Activated CD4-positive, alpha-beta memory T cell treated with anti-CD3 and anti-CD28 coated beads, Interleukin-2, amount 10 ng/mL, durations not matched to agents 7 days and 5 days (primary cell): ENCODE measurements at regions of chr17 and their contacts with region 1.

Region 1: GRCh38 chr17:65137021-65137991 is at the start of gene RGS9:
- DNase-seq: peak; percentile 90
- H3K4me3 Mint-ChIP-seq: peak within 1 kb of the TSS; percentile 84
- H3K27ac Mint-ChIP-seq: peak within 1 kb of the TSS; percentile 41
- H3K4me1 Mint-ChIP-seq: peaks cover 51% of the 10 kb centered on the region
- H3K27me3 Mint-ChIP-seq: no peaks in the 10 kb centered on the region
- total RNA-seq, gene RGS9: 30.4 to 31.2 TPM

Region 2: DNA sequence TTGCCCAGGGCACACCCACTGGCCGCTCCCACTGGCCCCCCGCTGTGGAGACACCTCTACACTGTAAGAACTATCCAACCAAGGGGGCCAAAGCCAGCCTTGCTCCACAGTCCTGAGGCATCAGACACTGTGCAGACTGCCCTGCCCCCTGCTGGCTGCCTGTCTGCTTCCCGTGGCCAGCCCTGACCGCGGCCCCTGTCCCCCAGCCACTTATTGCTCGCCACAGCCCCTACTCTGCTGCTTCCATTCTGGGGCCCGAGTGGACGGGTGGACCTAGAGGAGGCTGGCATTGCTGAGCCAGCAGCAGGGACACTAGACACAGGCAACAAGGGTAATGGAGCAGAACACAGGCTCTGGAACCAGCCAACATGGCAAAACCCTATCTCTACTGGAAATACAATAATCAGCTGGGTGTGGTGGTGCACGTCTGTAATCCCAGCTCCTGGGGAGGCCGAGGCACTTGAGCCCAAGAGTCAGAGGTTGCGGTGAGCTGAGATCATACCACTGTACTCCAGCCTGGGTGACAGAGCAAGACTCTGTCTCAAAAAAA is 198.3 kb before region 1 on chr17:
- CTCF ChIA-PET with region 1: interaction called, 14 read pairs
- POLR2A ChIA-PET with region 1: no interaction called
- DNase-seq: peak; percentile 54
- H3K4me3 Mint-ChIP-seq: no peak overlapping the region
- H3K27ac Mint-ChIP-seq: no peak overlapping the region
- H3K4me1 Mint-ChIP-seq: peaks cover 24% of the 10 kb centered on the region
- H3K27me3 Mint-ChIP-seq: no peaks in the 10 kb centered on the region

Region 3: GRCh38 chr17:65122836-65123756 is 14.2 kb before region 1 on chr17:
- CTCF ChIA-PET with region 1: interaction called, 17 read pairs
- POLR2A ChIA-PET with region 1: interaction called, 12 read pairs
- DNase-seq: peak; percentile 89
- H3K4me3 Mint-ChIP-seq: peak overlapping the region; percentile 75
- H3K27ac Mint-ChIP-seq: peak overlapping the region; percentile 97
- H3K4me1 Mint-ChIP-seq: peaks cover 48% of the 10 kb centered on the region
- H3K27me3 Mint-ChIP-seq: peaks cover 11% of the 10 kb centered on the region

Region 4: DNA sequence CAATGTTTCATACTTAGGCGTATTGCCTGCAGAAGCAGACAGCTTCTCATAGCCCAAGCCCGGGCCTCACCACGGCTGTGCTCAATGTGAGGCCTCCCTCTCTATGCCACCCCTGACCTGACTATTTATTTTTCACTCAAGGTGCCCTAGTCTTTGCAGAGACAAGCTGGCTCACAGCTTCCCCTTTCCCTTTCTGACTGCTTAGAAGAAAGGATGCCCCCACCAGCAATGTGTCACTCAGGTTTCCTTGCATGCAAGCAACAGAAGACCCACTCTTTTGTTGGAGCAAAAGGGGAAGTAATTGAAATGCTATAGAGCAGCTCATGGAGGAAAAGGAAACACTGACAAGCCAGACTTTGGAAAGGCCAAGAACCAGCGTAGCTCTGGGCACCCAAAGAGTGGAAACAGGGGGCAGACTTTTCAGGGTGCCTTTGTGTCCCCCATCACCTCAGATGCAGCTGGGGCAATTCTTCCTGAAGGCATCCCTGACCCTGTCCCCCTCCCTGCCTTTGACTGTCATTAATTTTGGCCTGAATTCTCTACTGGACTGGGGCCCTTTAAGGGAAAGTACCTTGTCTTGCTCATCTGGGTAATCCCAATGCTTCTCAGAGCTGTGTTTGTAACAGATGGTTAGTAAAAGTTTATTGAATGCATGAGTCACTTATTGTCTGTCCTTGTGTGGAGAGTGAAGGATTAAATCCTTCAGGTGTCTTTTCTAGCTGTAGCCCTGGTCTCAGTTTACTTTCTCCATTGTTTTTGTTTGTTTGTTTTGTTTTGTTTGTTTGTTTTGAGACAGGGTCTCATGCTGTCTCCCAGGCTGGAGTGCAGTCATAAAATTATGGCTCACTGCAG is 17.7 kb after region 1 on chr17:
- CTCF ChIA-PET with region 1: interaction called, 21 read pairs
- POLR2A ChIA-PET with region 1: interaction called, 7 read pairs
- DNase-seq: no peak
- H3K4me3 Mint-ChIP-seq: no peak overlapping the region
- H3K27ac Mint-ChIP-seq: peak overlapping the region; percentile 51
- H3K4me1 Mint-ChIP-seq: peaks cover 22% of the 10 kb centered on the region
- H3K27me3 Mint-ChIP-seq: no peaks in the 10 kb centered on the region

Region 5: DNA sequence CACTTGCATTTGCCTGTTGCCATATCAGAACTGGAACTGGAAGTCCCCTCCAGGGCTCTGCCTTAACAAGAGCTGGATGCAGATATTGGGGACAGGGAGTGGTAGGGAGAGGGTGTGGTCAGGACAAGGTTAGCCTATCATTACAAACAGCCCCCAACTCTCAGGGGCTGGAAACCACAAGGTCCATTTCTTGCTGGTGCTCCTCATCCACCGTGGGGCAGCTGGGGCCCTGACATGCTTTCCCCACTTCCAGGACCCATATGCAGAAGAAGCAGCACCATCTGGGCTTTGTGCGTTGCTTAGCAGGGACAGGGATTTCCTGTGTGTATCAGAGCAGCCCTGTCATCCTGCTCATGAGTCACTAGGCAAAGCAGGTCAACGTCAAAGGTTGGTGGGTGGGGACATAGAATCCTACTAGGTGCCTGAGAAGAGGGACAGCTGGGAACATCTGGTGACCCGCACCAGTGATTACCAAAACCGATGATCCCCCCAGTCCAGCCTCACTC is 26.7 kb after region 1 on chr17:
- CTCF ChIA-PET with region 1: interaction called, 11 read pairs
- POLR2A ChIA-PET with region 1: interaction called, 3 read pairs
- DNase-seq: peak; percentile 77
- H3K4me3 Mint-ChIP-seq: no peak overlapping the region
- H3K27ac Mint-ChIP-seq: peak overlapping the region; percentile 48
- H3K4me1 Mint-ChIP-seq: peaks cover 27% of the 10 kb centered on the region
- H3K27me3 Mint-ChIP-seq: no peaks in the 10 kb centered on the region

Region 6: GRCh38 chr17:65173284-65173793 is 36.0 kb after region 1 on chr17:
- CTCF ChIA-PET with region 1: interaction called, 22 read pairs
- POLR2A ChIA-PET with region 1: interaction called, 34 read pairs
- DNase-seq: peak; percentile 94
- H3K4me3 Mint-ChIP-seq: no peak overlapping the region
- H3K27ac Mint-ChIP-seq: no peak overlapping the region
- H3K4me1 Mint-ChIP-seq: peaks cover 41% of the 10 kb centered on the region
- H3K27me3 Mint-ChIP-seq: no peaks in the 10 kb centered on the region

Region 7: DNA sequence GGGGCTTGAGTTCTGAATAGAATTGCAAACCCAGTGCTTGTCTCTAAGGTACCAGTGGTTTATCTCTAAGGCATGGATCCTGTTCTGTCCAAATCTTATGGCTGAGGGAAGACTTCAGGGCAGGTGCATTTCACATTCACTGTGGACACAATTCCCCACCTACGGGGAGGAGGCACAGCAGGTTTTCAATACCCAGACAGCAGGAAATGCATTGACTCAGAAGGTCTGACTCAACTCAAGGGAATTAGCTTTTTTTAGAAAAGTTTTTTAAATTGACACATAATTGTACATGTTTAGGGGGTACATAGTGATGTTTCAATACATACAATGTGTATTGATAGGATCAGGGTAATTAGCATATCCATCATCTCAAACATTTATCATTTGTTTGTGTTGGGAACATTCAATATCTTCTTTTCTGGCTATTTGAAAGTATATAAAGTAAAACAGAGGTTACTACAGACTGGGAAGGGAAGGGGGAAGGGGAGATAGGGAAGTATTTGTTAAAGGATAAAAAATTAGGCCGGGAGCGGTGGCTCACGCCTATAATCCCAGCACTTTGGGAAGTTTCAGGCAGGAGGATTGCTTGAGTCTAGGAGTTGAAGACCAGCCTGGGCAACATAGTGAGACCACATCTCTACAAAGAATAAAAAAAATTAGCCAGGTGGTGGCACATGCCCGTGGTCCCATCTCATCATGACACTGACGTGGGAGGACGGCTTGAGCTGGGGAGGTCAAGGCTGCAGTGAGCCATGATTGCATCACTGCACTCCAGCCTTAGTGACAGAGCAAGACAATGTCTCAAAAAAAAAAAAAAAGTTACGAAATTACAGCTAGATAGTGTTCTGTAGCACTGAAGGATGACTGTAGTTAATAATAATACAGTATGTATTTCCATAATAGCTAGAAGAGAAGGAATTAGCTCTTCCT is 54.8 kb after region 1 on chr17:
- CTCF ChIA-PET with region 1: interaction called, 13 read pairs
- POLR2A ChIA-PET with region 1: no interaction called
- DNase-seq: no peak
- H3K4me3 Mint-ChIP-seq: no peak overlapping the region
- H3K27ac Mint-ChIP-seq: peak overlapping the region; percentile 3
- H3K4me1 Mint-ChIP-seq: peaks cover 53% of the 10 kb centered on the region
- H3K27me3 Mint-ChIP-seq: no peaks in the 10 kb centered on the region